ENCODE measurements at regions of chr14 and their contacts with region 1.

Region 1: GRCh38 chr14:74945823-74946682 is 9.3 kb downstream of the PGF start:
- DNase-seq: peak; percentile 60 to 71 (median 63)
- H3K4me3 ChIP-seq: no peak overlapping the region
- H3K27ac ChIP-seq: no peak overlapping the region
- H3K4me1 ChIP-seq: peaks cover 2 to 51% (median 27%) of the 10 kb centered on the region in 4 experiments
- H3K27me3 ChIP-seq: no peaks in the 10 kb centered on the region

Region 2: GRCh38 chr14:74922739-74923401 is 23.2 kb before region 1 on chr14 and contains the start of gene RPS6KL1:
- CTCF ChIA-PET with region 1: interaction called, 27 read pairs
- POLR2A ChIA-PET with region 1: interaction called, 4 read pairs
- DNase-seq: peak; percentile 81 to 89 (median 87)
- H3K4me3 ChIP-seq: peak within 1 kb of the TSS; percentile 4 to 74 (median 66)
- H3K27ac ChIP-seq: no peak within 1 kb of the TSS
- H3K4me1 ChIP-seq: peaks cover 0 to 6% (median 3%) of the 10 kb centered on the region in 4 experiments
- H3K27me3 ChIP-seq: no peaks in the 10 kb centered on the region

Region 3: GRCh38 chr14:74932401-74932901 is 13.6 kb before region 1 on chr14:
- CTCF ChIA-PET with region 1: interaction called, 27 read pairs
- POLR2A ChIA-PET with region 1: no interaction called
- DNase-seq: peak; percentile 28 to 76 (median 71)
- H3K4me3 ChIP-seq: peak overlapping the region in 1 of 7 experiments; percentile 21
- H3K27ac ChIP-seq: peak overlapping the region in 1 of 2 experiments; percentile 2
- H3K4me1 ChIP-seq: peaks cover 3 to 64% (median 43%) of the 10 kb centered on the region in 4 experiments
- H3K27me3 ChIP-seq: no peaks in the 10 kb centered on the region

Region 4: DNA sequence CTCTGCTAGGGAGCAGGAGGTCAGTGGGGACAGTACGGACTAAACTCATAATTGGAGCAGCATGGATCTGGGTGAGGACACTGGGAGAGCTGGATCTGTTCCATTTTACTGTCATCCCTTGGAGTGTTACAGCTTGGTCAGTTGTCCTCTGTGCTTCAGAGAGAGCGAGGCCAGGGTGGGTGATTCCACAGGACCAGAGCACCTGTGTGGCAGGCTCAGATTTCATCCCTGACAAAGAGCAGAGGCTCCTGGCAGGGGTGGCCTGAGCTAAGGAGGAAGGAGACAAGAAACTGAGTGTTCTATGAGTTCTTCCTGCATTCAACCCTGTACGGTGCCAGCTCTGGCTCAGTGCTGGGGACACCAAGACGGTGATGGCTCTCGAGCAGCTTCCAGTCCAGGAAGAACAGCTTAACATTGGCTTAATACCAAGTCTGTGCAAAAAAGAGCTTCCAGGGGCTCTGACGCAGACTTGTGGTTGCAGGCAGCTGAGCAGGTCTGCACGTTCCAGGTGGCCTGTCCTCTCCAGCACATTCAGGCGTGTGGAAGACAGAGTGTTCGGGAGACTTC is 17.7 kb after region 1 on chr14:
- CTCF ChIA-PET with region 1: interaction called, 12 read pairs
- POLR2A ChIA-PET with region 1: no interaction called
- DNase-seq: peak; percentile 28 to 61 (median 55)
- H3K4me3 ChIP-seq: no peak overlapping the region
- H3K27ac ChIP-seq: no peak overlapping the region
- H3K4me1 ChIP-seq: peaks cover 4 to 32% (median 14%) of the 10 kb centered on the region in 4 experiments
- H3K27me3 ChIP-seq: no peaks in the 10 kb centered on the region

Region 5: GRCh38 chr14:74973003-74973653 is 27.1 kb after region 1 on chr14:
- CTCF ChIA-PET with region 1: interaction called, 20 read pairs
- POLR2A ChIA-PET with region 1: no interaction called
- DNase-seq: peak; percentile 30 to 87 (median 80)
- H3K4me3 ChIP-seq: no peak overlapping the region
- H3K27ac ChIP-seq: no peak overlapping the region
- H3K4me1 ChIP-seq: peaks cover 0 to 32% (median 15%) of the 10 kb centered on the region in 4 experiments
- H3K27me3 ChIP-seq: no peaks in the 10 kb centered on the region

Measured in common myeloid progenitor, CD34-positive (primary cell).